AG04449 (cell line): ENCODE measurements at regions of chr3 and their contacts with region 1.

Region 1: GRCh38 chr3:128845778-128846485 is 33.5 kb upstream of the ACAD9 start:
- DNase-seq: no peak
- H3K4me3 ChIP-seq: peak overlapping the region; percentile 48
- CTCF ChIP-seq: peak; percentile 66

Region 2: DNA sequence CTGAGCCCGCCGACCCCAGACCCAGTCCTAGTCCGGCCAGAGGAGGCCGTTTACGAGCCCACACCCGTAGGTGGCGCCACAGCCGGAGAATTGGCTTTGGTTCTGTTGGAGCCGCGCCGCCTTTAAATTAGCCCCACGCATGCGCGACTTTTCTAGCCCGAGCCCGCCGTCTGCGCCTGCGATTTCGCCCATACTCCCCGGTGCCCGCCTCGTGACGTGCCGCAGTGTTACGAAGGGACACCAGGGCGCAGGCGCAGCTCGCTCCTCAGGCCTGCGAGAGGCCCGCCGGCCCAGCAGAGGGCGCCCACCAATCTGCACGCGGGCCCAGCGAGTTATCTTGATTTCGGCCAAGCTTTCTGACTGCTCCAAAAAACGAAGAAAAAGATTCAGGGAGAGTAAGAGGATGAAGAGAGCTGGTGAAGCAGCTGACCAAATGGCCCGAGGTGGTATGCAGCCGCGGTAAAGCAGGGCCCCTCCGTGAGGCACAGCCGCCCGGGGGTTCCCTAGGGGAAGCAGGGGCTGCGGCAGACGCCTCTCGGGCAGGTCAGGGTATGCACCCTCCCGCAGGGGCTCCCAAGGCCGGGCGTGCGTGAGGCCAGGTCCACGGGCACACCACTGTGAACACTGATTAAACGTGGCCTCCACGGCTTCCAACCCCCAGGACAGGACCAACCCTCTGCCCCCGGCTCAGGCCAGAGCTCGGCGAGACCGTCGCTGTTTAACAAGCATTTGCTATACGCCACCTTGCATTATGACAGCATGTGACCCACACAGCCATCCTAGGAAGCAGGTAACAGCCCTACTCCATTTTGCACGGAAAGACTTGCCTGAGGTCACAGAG is 228.2 kb before region 1 on chr3:
- CTCF ChIA-PET with region 1: interaction called, 39 read pairs
- POLR2A ChIA-PET with region 1: interaction called, 5 read pairs
- DNase-seq: peak; percentile 65
- H3K4me3 ChIP-seq: peak overlapping the region; percentile 85
- CTCF ChIP-seq: peak; percentile 92

Region 3: GRCh38 chr3:128650096-128651050 is 195.6 kb before region 1 on chr3 and contains the start of gene RPN1:
- CTCF ChIA-PET with region 1: interaction called, 11 read pairs
- POLR2A ChIA-PET with region 1: no interaction called
- DNase-seq: peak; percentile 75
- H3K4me3 ChIP-seq: peak within 1 kb of the TSS; percentile 100
- CTCF ChIP-seq: no peak

Region 4: DNA sequence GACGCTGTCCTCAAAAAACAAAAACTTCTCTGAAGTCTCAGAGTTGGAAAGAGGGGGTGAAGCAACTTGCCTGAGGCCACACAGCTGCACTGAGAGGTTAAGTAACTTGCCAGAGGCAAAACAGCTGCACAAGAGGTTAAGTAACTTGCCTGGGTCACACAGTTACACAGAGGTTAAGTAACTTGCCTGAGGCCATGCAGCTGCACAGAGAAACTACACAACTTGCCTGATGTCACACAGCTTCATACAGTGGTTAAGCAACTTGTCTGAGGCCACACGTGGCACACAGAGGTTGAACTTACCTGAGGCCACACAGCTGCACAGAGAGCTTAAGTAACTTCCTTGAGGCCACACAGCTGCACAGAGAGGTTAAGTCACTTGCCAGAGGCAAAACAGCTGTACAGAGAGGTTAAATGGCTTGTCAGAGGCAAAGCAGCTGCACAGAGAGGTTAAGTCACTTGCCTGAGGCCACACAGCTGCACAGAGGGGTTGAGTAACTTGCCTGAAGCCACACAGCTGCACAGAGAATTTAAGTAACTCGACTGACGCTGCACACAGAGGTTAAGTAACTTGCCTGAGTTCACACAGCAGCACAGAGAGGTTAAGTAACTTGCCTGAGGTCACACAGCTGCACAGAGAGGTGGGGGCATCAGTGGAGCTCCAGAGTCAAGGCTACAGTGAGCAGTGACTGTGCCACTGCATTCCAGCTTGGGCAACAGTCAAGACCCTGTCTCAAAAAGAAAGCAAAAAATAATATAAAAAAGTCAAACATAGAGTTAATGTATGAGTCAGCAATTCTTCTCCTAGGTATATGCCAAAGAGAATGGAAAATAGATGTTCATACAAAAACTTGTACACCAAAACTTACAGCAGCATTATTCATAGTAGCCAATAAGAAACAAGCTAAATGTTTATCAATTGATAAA is 21.5 kb after region 1 on chr3:
- CTCF ChIA-PET with region 1: interaction called, 12 read pairs
- POLR2A ChIA-PET with region 1: no interaction called
- DNase-seq: no peak
- H3K4me3 ChIP-seq: no peak overlapping the region
- CTCF ChIP-seq: no peak

Region 5: GRCh38 chr3:128879125-128879969 is 33.4 kb after region 1 on chr3 and contains the start of gene ACAD9:
- CTCF ChIA-PET with region 1: interaction called, 29 read pairs
- POLR2A ChIA-PET with region 1: no interaction called
- DNase-seq: peak; percentile 80
- H3K4me3 ChIP-seq: peak within 1 kb of the TSS; percentile 89
- CTCF ChIP-seq: no peak

Region 6: DNA sequence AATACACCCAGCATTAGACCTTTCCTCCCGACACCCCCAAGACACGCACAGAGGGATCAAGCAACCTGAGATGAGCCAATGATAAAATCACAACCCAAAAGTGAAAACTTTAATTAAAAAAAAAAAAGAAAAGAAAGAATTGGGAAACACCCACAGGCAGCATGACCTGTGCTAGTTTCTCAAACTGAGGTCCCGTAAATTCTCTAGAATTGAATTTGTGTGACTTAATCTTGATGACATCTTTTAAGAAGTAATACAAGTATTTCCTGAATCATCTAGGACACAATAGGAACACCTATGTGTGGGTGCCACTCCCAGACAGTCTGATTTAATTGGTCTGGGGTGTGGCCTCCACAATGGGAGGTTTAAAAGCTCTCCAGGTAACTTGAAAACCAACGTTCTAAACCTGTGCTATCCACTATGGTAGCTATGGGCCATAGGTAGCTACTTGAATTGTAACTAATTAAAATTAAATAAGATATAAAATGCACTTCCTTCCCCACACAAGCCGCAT is 119.8 kb after region 1 on chr3:
- CTCF ChIA-PET with region 1: no interaction called
- POLR2A ChIA-PET with region 1: no interaction called
- DNase-seq: no peak
- H3K4me3 ChIP-seq: no peak overlapping the region
- CTCF ChIP-seq: no peak

Region 7: DNA sequence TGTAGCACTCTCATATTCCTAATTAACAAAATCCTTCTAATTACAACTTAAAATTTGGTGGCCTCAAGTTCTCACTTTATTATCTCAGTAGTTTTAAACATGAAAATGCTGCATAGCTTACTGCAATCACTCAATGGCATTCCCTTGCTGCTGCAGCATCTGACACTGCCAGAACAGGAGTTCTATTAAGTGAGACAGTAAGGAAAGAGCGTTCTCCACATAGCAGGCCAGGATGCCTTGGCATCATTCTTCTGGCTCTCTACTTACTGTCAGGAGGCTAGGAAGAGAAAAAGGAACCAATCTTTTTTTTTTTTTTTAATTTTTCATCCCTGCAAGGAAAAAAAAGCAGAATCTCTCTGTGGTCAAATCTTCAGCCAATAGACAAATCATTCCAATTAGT is 334.5 kb after region 1 on chr3:
- CTCF ChIA-PET with region 1: no interaction called
- POLR2A ChIA-PET with region 1: no interaction called
- DNase-seq: no peak
- H3K4me3 ChIP-seq: no peak overlapping the region
- CTCF ChIP-seq: no peak